ENCODE measurements at regions of chr1 and their contacts with region 1.

Region 1: GRCh38 chr1:202315576-202316168 is 26.1 kb downstream of the UBE2T start:
- DNase-seq: peak; percentile 89
- H3K4me3 Mint-ChIP-seq: no peak overlapping the region
- H3K27ac Mint-ChIP-seq: no peak overlapping the region
- H3K4me1 Mint-ChIP-seq: peaks cover 2% of the 10 kb centered on the region
- H3K27me3 Mint-ChIP-seq: no peaks in the 10 kb centered on the region

Region 2: DNA sequence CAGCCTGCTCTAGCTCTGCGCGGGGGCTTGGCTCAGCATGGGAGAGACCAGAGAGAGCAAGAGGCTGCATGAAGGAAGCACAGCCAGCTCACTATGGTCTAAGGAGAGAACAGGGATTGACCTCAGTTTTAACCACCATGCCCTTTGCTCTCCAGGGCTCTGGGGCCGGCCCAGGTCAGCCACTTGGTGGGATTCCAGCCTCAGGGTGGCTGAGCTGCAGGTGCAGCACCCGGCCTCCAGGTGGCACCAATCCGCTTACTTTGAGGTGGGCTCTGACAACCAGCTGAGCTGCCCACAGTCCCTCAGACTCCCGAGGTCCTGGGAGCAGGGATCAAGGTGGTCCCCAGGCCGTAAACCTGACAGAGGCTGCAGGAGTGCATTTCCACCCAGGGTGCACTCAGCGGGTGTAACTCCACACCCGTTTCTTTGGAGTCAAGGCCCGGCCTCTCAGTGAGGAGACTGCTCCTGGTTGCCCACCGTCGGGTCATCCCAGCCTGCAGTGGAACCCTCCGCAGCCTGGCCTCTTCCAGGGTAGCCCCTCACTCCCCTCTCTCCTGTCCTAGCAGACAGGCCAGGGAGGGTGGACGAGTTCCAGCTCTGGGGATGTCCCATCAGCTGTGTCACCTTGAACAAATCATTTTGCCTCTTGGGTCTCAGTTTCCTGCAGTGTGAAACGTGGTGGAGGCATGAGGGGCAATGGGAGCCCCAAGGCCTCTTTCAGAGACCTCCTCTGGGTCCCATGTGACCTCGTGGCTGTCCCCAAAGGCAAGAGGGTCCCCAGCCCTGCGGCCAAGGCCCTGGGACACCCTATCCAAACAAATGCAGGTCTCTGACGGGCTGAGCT is 122.7 kb before region 1 on chr1:
- CTCF ChIA-PET with region 1: interaction called, 52 read pairs
- intact Hi-C with region 1: loop called (anchors 1 kb)
- DNase-seq: peak; percentile 71
- H3K4me3 Mint-ChIP-seq: no peak overlapping the region
- H3K27ac Mint-ChIP-seq: no peak overlapping the region
- H3K4me1 Mint-ChIP-seq: peaks cover 2% of the 10 kb centered on the region
- H3K27me3 Mint-ChIP-seq: peaks cover 25% of the 10 kb centered on the region

Region 3: DNA sequence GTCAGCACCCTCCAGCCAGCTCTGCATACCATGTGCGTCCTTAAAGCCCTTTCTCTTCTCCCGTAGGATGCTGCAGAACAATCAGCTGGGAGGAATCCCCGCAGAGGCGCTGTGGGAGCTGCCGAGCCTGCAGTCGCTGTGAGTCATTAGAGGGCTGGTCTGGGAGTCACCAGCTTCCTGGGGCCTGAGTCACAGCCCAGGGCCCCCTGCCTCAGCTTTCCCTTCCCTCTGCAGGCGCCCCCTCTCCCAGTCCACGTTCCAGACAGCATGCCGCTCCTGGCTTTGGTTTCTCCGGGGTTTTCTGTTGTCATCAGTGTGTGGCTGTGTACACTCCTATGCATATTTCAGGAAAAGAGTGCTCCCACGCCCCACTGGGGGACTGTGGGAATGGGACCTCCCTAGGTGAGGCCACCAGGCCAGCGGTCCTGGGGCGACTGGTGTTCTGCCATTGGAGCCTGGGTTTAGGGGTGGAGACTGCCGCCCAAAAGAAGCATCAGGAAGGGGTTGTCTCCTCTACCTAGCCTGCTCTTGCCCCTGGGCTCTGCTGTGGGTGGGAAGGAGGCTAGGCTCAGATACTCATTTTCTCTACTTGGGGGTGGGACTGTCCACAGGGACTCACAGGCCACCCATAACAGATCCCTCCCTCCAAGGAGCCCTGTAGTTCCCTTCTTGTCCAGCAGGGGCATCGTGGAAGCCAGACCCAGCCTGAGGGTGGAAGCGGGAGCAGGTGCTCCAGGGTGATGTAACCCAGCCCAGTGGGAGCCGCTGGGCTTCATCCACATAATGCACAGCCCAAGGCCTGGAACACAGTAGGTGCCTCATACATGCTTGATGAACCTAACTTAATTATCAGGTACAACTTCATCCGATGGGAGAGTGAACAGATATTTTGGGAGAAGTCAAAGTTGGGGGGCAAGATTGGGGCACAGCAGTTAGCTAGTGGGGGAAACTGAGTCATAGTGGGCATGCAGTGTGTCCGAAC is 79.5 kb before region 1 on chr1:
- CTCF ChIA-PET with region 1: no interaction called
- intact Hi-C with region 1: loop called (anchors 2 kb)
- DNase-seq: peak; percentile 86
- H3K4me3 Mint-ChIP-seq: peak overlapping the region; percentile 16
- H3K27ac Mint-ChIP-seq: no peak overlapping the region
- H3K4me1 Mint-ChIP-seq: peaks cover 3% of the 10 kb centered on the region
- H3K27me3 Mint-ChIP-seq: peaks cover 13% of the 10 kb centered on the region

Region 4: DNA sequence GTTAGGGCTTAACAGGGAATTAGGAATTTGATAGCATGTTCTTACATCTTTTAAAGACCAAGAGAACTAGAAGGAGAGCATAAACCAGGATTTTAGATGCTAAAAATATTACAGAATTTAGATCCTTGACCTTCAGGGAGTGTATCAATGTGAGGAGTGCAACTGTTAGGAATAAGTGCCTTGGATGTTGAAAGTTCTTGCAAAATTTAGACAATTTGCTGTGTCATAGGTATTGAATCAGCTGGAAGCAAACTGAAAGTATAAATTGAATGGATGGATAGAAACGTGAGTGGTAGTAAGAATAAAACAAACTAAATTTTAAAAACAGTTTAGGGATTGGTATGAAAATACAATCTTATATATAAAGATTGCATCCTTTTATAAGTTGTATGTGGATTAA is 60.6 kb after region 1 on chr1:
- CTCF ChIA-PET with region 1: no interaction called
- intact Hi-C with region 1: no loop called
- DNase-seq: no peak
- H3K4me3 Mint-ChIP-seq: no peak overlapping the region
- H3K27ac Mint-ChIP-seq: no peak overlapping the region
- H3K4me1 Mint-ChIP-seq: peaks cover 29% of the 10 kb centered on the region
- H3K27me3 Mint-ChIP-seq: no peaks in the 10 kb centered on the region

Measured in activated naive CD4-positive, alpha-beta T cell treated with anti-CD3 and anti-CD28 coated beads for 36 hours (primary cell).